Activated B cell treated with CpG ODN at 0.5 μM for 24 hours (primary cell): ENCODE measurements at regions of chr12 and their contacts with region 1.

Region 1: GRCh38 chr12:52082988-52083637 is 3.6 kb downstream of the SMIM41 start:
- DNase-seq: peak; percentile 70
- ATAC-seq: peak; percentile 63
- H3K4me3 Mint-ChIP-seq: peak overlapping the region; percentile 42
- H3K27ac Mint-ChIP-seq: peak overlapping the region; percentile 48
- H3K4me1 Mint-ChIP-seq: peaks cover 42% of the 10 kb centered on the region
- H3K27me3 Mint-ChIP-seq: peaks cover 8% of the 10 kb centered on the region
- CTCF ChIP-seq: peak; percentile 98

Region 2: GRCh38 chr12:51941011-51941581 is 142.0 kb before region 1 on chr12:
- CTCF ChIA-PET with region 1: no interaction called
- POLR2A ChIA-PET with region 1: no interaction called
- intact Hi-C with region 1: no loop called
- DNase-seq: no peak
- ATAC-seq: no peak
- H3K4me3 Mint-ChIP-seq: no peak overlapping the region
- H3K27ac Mint-ChIP-seq: no peak overlapping the region
- H3K4me1 Mint-ChIP-seq: no peaks in the 10 kb centered on the region
- H3K27me3 Mint-ChIP-seq: peaks cover 35% of the 10 kb centered on the region
- CTCF ChIP-seq: no peak

Region 3: DNA sequence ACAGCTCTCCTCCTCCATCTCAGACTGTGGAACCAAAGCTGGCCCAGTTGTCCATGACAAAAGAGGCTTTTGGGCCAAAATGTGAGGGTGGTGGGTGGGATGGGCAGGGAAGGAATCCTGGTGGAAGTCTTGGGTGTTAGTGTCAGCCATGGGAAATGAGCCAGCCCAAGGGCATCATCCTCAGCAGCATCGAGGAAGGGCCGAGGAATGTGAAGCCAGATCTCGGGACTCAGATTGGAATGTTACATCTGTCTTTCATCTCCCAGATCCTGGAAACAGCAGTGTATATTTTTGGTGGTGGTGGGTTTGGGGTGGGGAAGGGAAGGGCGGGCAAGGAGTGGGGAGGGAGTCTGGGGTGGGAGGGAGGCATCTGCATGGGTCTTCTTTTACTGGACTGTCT is 88.2 kb before region 1 on chr12:
- CTCF ChIA-PET with region 1: interaction called, 8 read pairs
- POLR2A ChIA-PET with region 1: no interaction called
- intact Hi-C with region 1: loop called (anchors 1 kb)
- DNase-seq: no peak
- ATAC-seq: no peak
- H3K4me3 Mint-ChIP-seq: no peak overlapping the region
- H3K27ac Mint-ChIP-seq: no peak overlapping the region
- H3K4me1 Mint-ChIP-seq: peaks cover 3% of the 10 kb centered on the region
- H3K27me3 Mint-ChIP-seq: no peaks in the 10 kb centered on the region
- CTCF ChIP-seq: no peak

Region 4: GRCh38 chr12:52004042-52004648 is 79.0 kb before region 1 on chr12:
- CTCF ChIA-PET with region 1: interaction called, 5 read pairs
- POLR2A ChIA-PET with region 1: interaction called, 18 read pairs
- intact Hi-C with region 1: no loop called
- DNase-seq: no peak
- ATAC-seq: no peak
- H3K4me3 Mint-ChIP-seq: no peak overlapping the region
- H3K27ac Mint-ChIP-seq: no peak overlapping the region
- H3K4me1 Mint-ChIP-seq: peaks cover 39% of the 10 kb centered on the region
- H3K27me3 Mint-ChIP-seq: no peaks in the 10 kb centered on the region
- CTCF ChIP-seq: no peak

Region 5: GRCh38 chr12:52032804-52033502 is 50.2 kb before region 1 on chr12:
- CTCF ChIA-PET with region 1: interaction called, 17 read pairs
- POLR2A ChIA-PET with region 1: interaction called, 6 read pairs
- intact Hi-C with region 1: no loop called
- DNase-seq: peak; percentile 82
- ATAC-seq: peak; percentile 84
- H3K4me3 Mint-ChIP-seq: peak overlapping the region; percentile 77
- H3K27ac Mint-ChIP-seq: peak overlapping the region; percentile 88
- H3K4me1 Mint-ChIP-seq: peaks cover 44% of the 10 kb centered on the region
- H3K27me3 Mint-ChIP-seq: no peaks in the 10 kb centered on the region
- CTCF ChIP-seq: no peak

Region 6: GRCh38 chr12:52050761-52051541 is 32.2 kb before region 1 on chr12 and contains the start of gene NR4A1:
- CTCF ChIA-PET with region 1: interaction called, 4 read pairs
- POLR2A ChIA-PET with region 1: interaction called, 18 read pairs
- intact Hi-C with region 1: loop called (anchors 1 kb)
- DNase-seq: peak; percentile 100
- ATAC-seq: peak; percentile 82
- H3K4me3 Mint-ChIP-seq: peak within 1 kb of the TSS; percentile 92
- H3K27ac Mint-ChIP-seq: peak within 1 kb of the TSS; percentile 95
- H3K4me1 Mint-ChIP-seq: peaks cover 49% of the 10 kb centered on the region
- H3K27me3 Mint-ChIP-seq: no peaks in the 10 kb centered on the region
- CTCF ChIP-seq: no peak
- total RNA-seq, gene NR4A1: 18.8 and 24.2 TPM in 2 replicates

Region 7: GRCh38 chr12:52069327-52070184 is 13.6 kb before region 1 on chr12 and contains the start of gene ATG101:
- CTCF ChIA-PET with region 1: interaction called, 10 read pairs
- POLR2A ChIA-PET with region 1: interaction called, 24 read pairs
- intact Hi-C with region 1: loop called (anchors 1 kb)
- DNase-seq: peak; percentile 87
- ATAC-seq: peak; percentile 94
- H3K4me3 Mint-ChIP-seq: peak within 1 kb of the TSS; percentile 87
- H3K27ac Mint-ChIP-seq: peak within 1 kb of the TSS; percentile 96
- H3K4me1 Mint-ChIP-seq: peaks cover 47% of the 10 kb centered on the region
- H3K27me3 Mint-ChIP-seq: no peaks in the 10 kb centered on the region
- CTCF ChIP-seq: peak; percentile 31
- total RNA-seq, gene ATG101: 25.6 and 32.5 TPM in 2 replicates